Left cardiac atrium (tissue), 4 donors: ENCODE measurements at regions of chr3 and their contacts with region 1.

Region 1: GRCh38 chr3:177359593-177360357 is 162.5 kb upstream of the TBL1XR1 start:
- DNase-seq: peak; percentile 96
- ATAC-seq: peak; percentile 90 to 93

Region 2: DNA sequence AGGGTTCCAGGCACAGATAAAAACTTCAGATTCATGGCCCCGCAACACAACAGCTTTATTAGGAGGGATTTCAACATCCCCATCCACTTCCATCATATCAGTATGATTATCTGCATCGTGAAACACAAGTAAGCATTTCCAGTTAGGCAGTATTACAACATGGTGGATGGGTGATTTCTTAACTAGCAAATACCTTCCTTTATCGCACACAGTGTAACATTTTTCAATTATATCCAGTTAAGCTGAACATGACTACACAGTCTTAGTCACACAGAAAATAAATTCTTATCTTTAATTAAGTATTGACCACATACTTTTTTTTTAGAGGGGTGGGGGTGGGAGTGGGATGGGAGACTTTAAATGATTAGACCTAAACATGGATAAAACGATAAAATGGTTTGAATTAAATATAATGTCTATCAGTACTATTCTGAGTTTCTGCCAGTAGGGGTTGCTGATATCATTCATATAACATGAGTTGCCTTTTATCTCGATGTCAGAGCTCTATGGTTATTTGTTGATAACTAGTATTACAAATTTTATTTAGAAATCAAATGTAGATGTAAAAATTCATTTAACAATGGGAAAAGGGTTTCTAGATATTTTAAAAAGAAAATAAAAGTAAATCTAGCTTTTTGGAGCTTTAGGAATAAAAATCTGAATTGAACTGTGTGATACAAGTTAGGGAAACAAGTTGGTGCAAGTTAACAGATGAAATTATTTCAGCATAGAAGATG is 309.1 kb before region 1 on chr3:
- intact Hi-C with region 1: loop called (anchors 5 to 10 kb)
- DNase-seq: no peak
- ATAC-seq: peak; percentile 63 to 68

Region 3: GRCh38 chr3:177426878-177427495 is 67.2 kb after region 1 on chr3:
- intact Hi-C with region 1: no loop called
- DNase-seq: no peak
- ATAC-seq: peak in 1 of 2 donors; percentile 24

Region 4: GRCh38 chr3:177452474-177453450 is 93.0 kb after region 1 on chr3:
- intact Hi-C with region 1: loop called in 1 of 2 experiments (anchors 10 kb)
- DNase-seq: no peak
- ATAC-seq: peak in 1 of 2 donors; percentile 91

Region 5: GRCh38 chr3:177597311-177598096 is 237.7 kb after region 1 on chr3:
- intact Hi-C with region 1: loop called in 1 of 2 experiments (anchors 10 kb)
- DNase-seq: peak; percentile 36
- ATAC-seq: peak; percentile 78 to 79